Activated naive CD4-positive, alpha-beta T cell treated with anti-CD3 and anti-CD28 coated beads for 36 hours (primary cell): ENCODE measurements at regions of chr2 and their contacts with region 1.

Region 1: DNA sequence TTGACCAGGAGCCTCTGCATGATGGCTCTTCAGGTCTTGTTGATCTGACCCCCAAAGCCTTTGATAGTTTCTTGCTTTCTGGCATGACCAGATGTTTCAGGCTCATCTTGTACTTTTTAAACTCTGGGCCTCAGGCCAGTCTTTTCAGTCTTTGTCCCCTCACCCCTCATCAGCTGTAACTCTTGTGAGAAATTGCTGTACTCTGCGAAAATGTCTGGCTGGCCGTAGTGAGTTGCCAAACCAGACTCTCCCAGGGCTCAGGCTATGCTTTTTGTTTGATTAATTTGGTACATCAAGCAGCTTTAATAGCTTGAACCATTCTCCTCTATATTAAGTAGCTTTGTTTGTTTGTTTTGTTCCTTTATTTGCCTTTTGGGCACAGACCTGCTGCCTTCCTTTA is 76.0 kb downstream of the BABAM2 start:
- DNase-seq: no peak
- H3K4me3 Mint-ChIP-seq: no peak overlapping the region
- H3K27ac Mint-ChIP-seq: no peak overlapping the region
- H3K4me1 Mint-ChIP-seq: peaks cover 47% of the 10 kb centered on the region
- H3K27me3 Mint-ChIP-seq: no peaks in the 10 kb centered on the region

Region 2: DNA sequence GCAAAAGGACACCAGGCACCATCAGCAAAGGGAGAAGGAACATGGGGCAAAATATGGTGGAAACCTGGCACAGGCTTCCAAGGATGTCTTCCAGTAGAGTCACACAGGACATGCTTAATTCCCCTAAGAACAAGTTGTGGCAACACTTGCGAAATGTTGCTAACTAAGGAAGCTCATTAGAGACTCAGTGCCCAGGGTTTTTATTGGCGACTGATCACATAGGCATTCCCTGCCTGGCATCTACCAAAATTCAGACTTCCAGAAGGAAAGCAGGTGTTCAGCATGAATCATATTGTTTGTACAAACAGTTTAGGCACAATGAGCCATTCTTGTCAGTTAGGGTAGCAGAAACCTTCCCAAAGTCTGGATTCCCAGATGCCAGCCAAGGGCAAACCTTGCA is 277.1 kb before region 1 on chr2:
- CTCF ChIA-PET with region 1: no interaction called
- intact Hi-C with region 1: no loop called
- DNase-seq: no peak
- H3K4me3 Mint-ChIP-seq: no peak overlapping the region
- H3K27ac Mint-ChIP-seq: no peak overlapping the region
- H3K4me1 Mint-ChIP-seq: no peaks in the 10 kb centered on the region
- H3K27me3 Mint-ChIP-seq: no peaks in the 10 kb centered on the region

Region 3: DNA sequence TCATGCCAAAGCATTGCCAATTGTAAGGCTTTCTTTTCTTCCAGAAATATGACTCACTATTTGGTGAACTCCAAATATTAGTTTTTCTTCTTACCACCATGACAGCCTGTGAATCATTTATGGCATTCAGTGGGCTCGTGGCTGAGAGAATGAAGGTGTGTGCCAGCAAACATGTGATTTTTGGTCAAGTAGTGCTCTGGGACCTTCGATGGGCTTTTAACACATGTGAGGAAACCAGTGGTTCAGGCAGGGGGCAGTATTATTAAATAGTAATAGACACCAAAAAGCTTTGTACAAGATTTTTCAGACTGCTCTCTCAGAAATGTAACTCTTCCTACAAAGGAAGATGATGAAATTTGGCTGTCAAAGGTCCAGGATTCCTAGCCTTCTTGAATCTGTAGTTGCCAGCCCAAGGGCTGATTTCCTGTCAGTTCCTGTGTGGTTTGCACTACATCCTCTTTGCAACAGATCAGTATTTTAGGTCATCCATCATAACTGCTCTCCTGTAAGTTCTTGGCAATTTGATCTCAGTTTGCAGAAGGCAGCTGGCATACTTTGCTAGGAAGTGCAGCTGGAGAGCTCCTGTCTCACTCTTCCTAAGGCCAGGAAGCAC is 11.6 kb before region 1 on chr2:
- CTCF ChIA-PET with region 1: interaction called, 3 read pairs
- intact Hi-C with region 1: loop called (anchors 1 kb)
- DNase-seq: peak; percentile 68
- H3K4me3 Mint-ChIP-seq: no peak overlapping the region
- H3K27ac Mint-ChIP-seq: peak overlapping the region; percentile 68
- H3K4me1 Mint-ChIP-seq: peaks cover 65% of the 10 kb centered on the region
- H3K27me3 Mint-ChIP-seq: no peaks in the 10 kb centered on the region

Region 4: GRCh38 chr2:27977608-27978312 is 11.3 kb after region 1 on chr2:
- CTCF ChIA-PET with region 1: interaction called, 3 read pairs
- intact Hi-C with region 1: loop called (anchors 1 kb)
- DNase-seq: peak; percentile 56
- H3K4me3 Mint-ChIP-seq: no peak overlapping the region
- H3K27ac Mint-ChIP-seq: peak overlapping the region; percentile 25
- H3K4me1 Mint-ChIP-seq: peaks cover 24% of the 10 kb centered on the region
- H3K27me3 Mint-ChIP-seq: no peaks in the 10 kb centered on the region

Region 5: DNA sequence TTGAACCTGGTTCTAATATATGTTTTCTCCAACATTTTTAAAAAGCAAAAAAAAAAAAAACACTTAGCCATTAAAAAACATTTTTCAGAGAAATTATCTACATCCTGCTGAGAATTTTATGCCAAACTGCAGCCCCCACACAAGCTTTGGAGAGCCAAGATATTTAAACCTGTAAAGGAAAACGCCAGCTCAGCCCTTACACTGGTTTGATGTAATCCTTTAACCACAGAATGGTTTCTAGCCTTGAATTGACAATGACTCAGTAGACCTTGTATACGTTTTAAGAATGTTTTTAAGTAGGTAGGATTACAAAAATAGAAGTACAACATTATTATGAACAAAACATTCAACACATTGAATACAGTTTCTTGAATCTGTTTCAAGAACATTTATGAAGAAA is 37.6 kb after region 1 on chr2:
- CTCF ChIA-PET with region 1: no interaction called
- intact Hi-C with region 1: loop called (anchors 1 kb)
- DNase-seq: peak; percentile 38
- H3K4me3 Mint-ChIP-seq: no peak overlapping the region
- H3K27ac Mint-ChIP-seq: no peak overlapping the region
- H3K4me1 Mint-ChIP-seq: peaks cover 20% of the 10 kb centered on the region
- H3K27me3 Mint-ChIP-seq: no peaks in the 10 kb centered on the region

Region 6: GRCh38 chr2:28250006-28250405 is 283.5 kb after region 1 on chr2:
- CTCF ChIA-PET with region 1: no interaction called
- intact Hi-C with region 1: loop called (anchors 5 kb)
- DNase-seq: no peak
- H3K4me3 Mint-ChIP-seq: no peak overlapping the region
- H3K27ac Mint-ChIP-seq: no peak overlapping the region
- H3K4me1 Mint-ChIP-seq: peaks cover 28% of the 10 kb centered on the region
- H3K27me3 Mint-ChIP-seq: no peaks in the 10 kb centered on the region